Right ventricle myocardium inferior (tissue), 1 donor: ENCODE measurements at regions of chr2 and their contacts with region 1.

Region 1: GRCh38 chr2:12884713-12885282 is 168.1 kb downstream of the TRIB2 start:
- DNase-seq: peak; percentile 69
- ATAC-seq: peak; percentile 82

Region 2: GRCh38 chr2:12824778-12825379 is 59.9 kb before region 1 on chr2:
- intact Hi-C with region 1: loop called (anchors 5 kb)
- DNase-seq: peak; percentile 71
- ATAC-seq: peak; percentile 89

Region 3: DNA sequence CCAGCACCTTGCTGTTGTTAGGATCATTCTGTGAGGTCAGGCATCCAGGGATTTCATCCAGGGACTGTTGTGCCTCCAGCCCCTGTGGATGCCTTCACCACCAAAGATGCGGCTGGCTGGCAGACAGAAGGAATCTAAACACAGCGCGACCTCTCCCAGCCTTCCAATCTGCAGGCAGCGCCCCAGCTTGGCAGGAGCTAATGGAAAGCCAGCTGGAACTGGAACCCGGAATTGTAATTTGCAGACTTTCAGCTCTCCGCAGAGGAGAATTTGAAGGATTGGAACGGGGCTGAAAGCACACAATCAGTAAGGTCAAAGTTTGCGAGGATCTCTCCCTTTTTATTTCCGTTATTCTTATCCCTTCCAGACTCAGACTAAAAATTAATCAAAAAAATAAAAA is 40.3 kb before region 1 on chr2:
- intact Hi-C with region 1: no loop called
- DNase-seq: peak; percentile 76
- ATAC-seq: peak; percentile 79

Region 4: GRCh38 chr2:13000664-13001363 is 116.0 kb after region 1 on chr2:
- intact Hi-C with region 1: no loop called
- DNase-seq: no peak
- ATAC-seq: peak; percentile 58